Lower leg skin (tissue), 4 donors: ENCODE measurements at regions of chr20 and their contacts with region 1.

Region 1: GRCh38 chr20:57089691-57090150 is 176.7 kb downstream of the BMP7 start:
- DNase-seq: peak; percentile 37 to 92
- H3K4me3 ChIP-seq: no peak overlapping the region
- CTCF ChIP-seq: peak in 1 of 3 donors; percentile 75
- POLR2A ChIP-seq: no peak

Region 2: GRCh38 chr20:57022312-57022711 is 67.4 kb before region 1 on chr20:
- intact Hi-C with region 1: no loop called
- DNase-seq: no peak
- H3K4me3 ChIP-seq: no peak overlapping the region
- CTCF ChIP-seq: no peak
- POLR2A ChIP-seq: no peak

Region 3: DNA sequence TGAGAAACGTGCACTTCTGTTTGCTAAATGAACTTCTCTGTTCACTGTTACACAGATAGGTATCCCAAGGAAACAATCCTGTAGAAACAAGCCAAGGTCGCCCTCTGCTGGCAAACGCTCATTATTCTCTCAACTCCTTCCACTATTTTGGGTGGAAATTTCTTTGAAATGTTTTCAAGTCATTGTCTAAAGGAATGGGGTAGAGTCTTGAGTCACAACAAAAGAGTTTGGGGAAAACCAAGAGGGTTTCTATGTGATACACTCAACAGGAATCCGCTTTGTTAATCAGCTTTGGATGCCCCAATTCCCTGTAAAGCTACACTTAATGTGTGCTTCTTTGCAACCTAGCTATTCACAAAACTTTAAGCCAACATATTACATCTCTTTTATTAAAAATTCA is 256.8 kb after region 1 on chr20:
- intact Hi-C with region 1: loop called (anchors 5 kb)
- DNase-seq: peak; percentile 78 to 93
- H3K4me3 ChIP-seq: no peak overlapping the region
- CTCF ChIP-seq: peak in 1 of 3 donors; percentile 49
- POLR2A ChIP-seq: no peak

Region 4: GRCh38 chr20:57546956-57547649 is 457.4 kb after region 1 on chr20:
- intact Hi-C with region 1: no loop called
- DNase-seq: no peak
- H3K4me3 ChIP-seq: no peak overlapping the region
- CTCF ChIP-seq: no peak
- POLR2A ChIP-seq: no peak